Motor neuron (in vitro differentiated cells): ENCODE measurements at regions of chr1 and their contacts with region 1.

Region 1: GRCh38 chr1:9867408-9868243 is 42.4 kb downstream of the CTNNBIP1 start:
- ATAC-seq: peak; percentile 80 to 98 (median 94)
- H3K4me3 ChIP-seq: no peak overlapping the region
- H3K27ac ChIP-seq: no peak overlapping the region
- H3K4me1 ChIP-seq: peaks cover 1 to 5% of the 10 kb centered on the region in 2 donors

Region 2: DNA sequence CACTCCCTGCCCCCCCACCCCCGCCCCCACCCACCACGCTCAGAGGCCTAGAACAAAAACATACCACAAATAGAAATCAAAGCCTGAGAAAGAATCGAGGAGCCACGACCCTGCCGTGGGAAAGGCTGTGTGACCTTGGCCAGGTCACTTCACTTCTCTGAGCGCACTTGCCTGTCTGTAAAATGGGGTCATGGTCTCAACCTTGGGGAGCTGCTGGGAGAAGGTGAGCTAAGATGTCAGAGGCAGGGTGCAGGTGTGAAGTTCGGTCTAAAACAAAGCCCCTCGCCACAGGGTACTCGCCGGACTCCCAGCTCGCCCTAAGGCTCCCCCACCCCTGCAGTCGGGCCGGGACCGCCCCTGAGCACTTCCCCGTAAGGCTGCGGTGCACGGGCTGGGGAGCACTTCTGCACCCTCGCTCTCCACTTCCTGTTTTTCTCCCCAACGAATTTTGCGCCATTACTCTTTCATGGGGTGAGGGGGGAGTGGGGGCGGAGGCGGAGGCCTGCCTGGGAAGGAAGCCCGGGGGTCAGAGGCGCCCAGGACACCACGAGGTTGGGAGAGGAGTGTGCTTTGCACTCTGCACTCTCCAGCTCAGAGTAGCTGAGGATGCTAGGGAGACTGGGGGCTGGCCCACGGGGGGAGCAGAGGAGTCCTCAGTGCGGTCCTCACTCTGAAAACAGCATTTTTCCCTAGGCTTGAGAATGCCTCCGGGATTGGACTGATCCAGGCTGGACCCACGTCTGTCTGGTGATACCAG is 238.0 kb before region 1 on chr1:
- in situ Hi-C with region 1: loop called in 8 of 9 experiments (anchors 25 kb)
- ATAC-seq: no peak
- H3K4me3 ChIP-seq: no peak overlapping the region
- H3K27ac ChIP-seq: no peak overlapping the region
- H3K4me1 ChIP-seq: no peaks in the 10 kb centered on the region

Region 3: GRCh38 chr1:9792156-9793042 is 75.2 kb before region 1 on chr1:
- in situ Hi-C with region 1: loop called in 1 of 9 experiments (anchors 10 kb)
- ATAC-seq: peak in 7 of 8 experiments; percentile 47 to 96 (median 72)
- H3K4me3 ChIP-seq: no peak overlapping the region
- H3K27ac ChIP-seq: no peak overlapping the region
- H3K4me1 ChIP-seq: peaks cover 18 to 24% of the 10 kb centered on the region in 2 donors

Region 4: DNA sequence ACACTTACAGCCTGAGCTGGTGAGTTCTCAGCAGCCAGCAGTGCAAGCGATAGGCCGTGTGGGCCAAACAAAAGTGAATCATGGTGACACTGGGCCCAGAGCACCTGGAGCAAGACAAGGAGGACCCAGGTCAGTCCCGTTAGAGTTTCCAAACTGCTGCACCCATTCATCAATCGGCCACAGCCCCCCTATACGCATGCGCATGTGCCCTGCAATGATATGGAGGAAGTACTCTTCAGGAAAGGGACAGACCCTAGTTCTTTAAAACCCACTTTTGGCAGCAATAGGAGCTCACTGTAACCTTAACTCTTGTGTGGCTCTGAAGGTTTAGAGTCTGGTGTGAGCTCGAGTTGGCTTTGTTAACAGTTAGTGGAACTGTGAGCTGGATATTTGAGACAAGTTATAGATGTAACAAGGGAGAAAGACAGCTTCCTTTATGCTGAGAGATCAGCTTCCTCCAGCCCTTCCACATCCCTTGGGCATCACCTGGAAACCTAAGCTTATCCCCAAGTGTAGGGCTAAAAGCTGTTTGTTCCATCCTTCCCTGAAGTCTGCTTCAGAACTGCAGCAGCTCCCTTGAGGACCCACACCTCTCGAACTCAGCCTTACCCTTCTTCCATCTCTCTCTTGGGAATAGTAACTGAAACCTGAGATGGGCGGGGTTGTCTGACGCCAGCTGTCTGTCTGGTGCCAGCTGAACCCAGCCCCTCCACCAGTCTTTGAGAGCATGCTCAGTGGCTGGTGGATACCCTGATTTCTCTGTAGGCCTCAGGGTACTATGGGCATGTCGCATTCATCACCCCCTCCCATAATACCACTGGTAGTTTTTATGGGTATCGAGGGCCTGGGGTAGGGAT is 93.3 kb after region 1 on chr1:
- in situ Hi-C with region 1: no loop called
- ATAC-seq: peak in 3 of 8 experiments; percentile 97 to 99 (median 98)
- H3K4me3 ChIP-seq: no peak overlapping the region
- H3K27ac ChIP-seq: no peak overlapping the region
- H3K4me1 ChIP-seq: no peaks in the 10 kb centered on the region